Left ventricle myocardium superior (tissue), 1 donor: ENCODE measurements at regions of chr13 and their contacts with region 1.

Region 1: GRCh38 chr13:43767341-43767931 is 19.3 kb downstream of the ENOX1 start:
- DNase-seq: peak; percentile 51
- ATAC-seq: peak; percentile 92

Region 2: GRCh38 chr13:43484432-43485225 is 282.8 kb before region 1 on chr13:
- intact Hi-C with region 1: no loop called
- DNase-seq: no peak
- ATAC-seq: peak; percentile 60

Region 3: DNA sequence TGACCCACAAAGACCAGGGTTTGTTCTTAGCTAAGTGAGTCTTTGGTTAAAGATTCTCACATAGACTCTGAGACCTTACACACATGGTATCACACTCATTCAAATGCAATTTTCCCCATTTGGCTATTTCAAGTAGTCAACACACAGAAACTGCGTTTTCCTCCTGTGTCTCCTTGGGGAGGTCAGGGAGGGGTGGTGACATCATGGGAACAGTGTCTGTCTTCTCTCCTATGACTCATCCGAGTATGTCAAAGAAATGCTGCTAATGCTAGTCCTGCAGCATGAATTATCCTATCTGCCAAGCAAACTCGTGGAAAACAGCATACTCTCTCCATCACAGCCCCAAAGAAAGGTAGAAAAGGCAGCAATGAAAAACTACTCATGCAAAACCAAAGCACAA is 80.9 kb before region 1 on chr13:
- intact Hi-C with region 1: loop called (anchors 5 kb)
- DNase-seq: peak; percentile 49
- ATAC-seq: peak; percentile 88

Region 4: DNA sequence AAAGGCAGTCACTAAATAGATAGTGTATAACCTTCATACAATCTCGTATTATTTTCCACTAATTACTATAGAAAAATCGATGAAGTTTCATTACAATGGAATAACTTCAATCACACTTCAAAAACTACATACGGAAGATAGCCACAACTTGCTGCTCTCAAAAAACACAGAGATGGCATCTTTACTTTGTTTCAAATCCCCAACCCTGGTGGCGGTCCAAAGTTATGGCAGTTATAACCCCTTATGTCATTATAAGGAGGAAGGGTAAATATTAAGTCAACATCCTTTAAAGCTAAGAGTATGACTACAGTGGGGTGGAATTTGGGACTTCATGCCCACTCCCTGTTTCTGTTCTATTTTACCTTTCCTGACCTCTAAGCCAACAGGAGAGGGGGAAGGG is 258.8 kb after region 1 on chr13:
- intact Hi-C with region 1: no loop called
- DNase-seq: no peak
- ATAC-seq: no peak